Cardiac septum (tissue), 1 donor: ENCODE measurements at regions of chr2 and their contacts with region 1.

Region 1: GRCh38 chr2:218033590-218034496 is 31.0 kb upstream of the TNS1 start:
- DNase-seq: no peak

Region 2: GRCh38 chr2:217993817-217994463 is 39.9 kb before region 1 on chr2:
- intact Hi-C with region 1: loop called (anchors 2 kb)
- DNase-seq: no peak